Activated B cell treated with CpG ODN at 0.5 μM for 24 hours (primary cell): ENCODE measurements at regions of chr15 and their contacts with region 1.

Region 1: DNA sequence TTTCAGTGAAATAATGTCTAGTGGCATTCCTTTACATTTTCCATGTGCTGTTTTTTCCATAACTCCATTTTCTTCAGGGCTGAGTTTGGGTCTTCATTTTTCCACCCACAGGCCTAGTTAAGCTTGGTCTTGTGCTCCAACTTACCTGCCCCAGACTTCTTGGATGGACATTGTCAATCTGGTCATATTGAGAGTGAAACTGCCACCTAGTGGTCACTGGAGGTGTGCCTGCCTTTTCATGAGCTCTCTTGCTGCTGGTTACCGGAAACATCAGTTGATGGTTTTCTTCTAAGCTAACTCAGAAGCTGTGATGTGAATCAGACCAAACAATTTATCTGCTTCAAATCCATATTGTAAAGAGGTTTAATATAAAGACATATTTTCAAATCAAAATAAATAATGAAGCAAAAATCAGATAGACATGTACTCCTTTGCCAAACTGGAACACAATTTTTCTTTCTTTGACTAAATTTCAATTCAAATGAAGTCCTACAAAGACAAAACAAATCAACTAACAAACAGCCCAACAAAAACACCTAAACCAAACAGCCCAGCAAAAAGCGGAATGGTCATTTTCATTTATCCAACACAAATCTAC is 135.1 kb upstream of the RASGRP1 start:
- DNase-seq: no peak
- ATAC-seq: peak; percentile 88
- H3K4me3 Mint-ChIP-seq: no peak overlapping the region
- H3K27ac Mint-ChIP-seq: no peak overlapping the region
- H3K4me1 Mint-ChIP-seq: no peaks in the 10 kb centered on the region
- H3K27me3 Mint-ChIP-seq: no peaks in the 10 kb centered on the region
- CTCF ChIP-seq: no peak

Region 2: GRCh38 chr15:37995461-37996347 is 704.0 kb before region 1 on chr15:
- CTCF ChIA-PET with region 1: no interaction called
- POLR2A ChIA-PET with region 1: no interaction called
- intact Hi-C with region 1: loop called (anchors 10 kb)
- DNase-seq: no peak
- ATAC-seq: peak; percentile 47
- H3K4me3 Mint-ChIP-seq: no peak overlapping the region
- H3K27ac Mint-ChIP-seq: no peak overlapping the region
- H3K4me1 Mint-ChIP-seq: no peaks in the 10 kb centered on the region
- H3K27me3 Mint-ChIP-seq: peaks cover 16% of the 10 kb centered on the region
- CTCF ChIP-seq: no peak

Region 3: DNA sequence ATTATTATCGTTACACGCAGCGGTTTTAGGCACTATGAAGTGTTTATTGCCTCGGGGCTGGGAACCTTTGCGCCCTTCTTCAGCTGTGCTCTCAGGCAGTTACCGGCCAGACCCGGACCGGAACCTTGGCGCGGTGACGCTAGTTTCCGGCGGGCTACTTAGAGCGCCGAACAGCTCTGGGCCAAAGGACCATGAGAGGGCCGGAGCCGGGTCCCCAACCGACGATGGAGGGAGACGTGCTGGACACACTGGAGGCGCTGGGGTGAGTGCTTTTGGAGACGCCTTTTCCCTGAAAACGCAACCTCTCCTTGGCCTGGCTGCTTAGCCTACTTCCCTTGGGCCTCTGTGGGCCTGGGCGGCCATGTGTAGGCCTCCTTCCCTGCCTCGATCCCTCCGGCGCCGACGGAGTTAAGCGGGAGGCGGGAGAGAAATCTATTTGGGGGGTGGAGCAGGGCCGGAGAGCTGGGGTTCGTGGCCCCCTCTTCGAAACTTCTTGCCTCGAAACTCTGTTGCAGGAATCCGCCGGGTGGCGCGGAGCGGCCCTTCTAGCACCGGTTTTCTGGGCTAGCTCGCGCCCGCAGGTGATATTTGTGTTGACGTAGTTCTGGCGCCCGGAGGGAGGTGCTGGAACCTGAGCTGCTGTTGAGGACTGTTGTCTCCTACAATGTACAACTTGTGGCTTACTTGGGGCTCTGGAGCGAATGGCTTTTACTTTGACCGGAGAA is 245.6 kb before region 1 on chr15 and contains the start of gene FAM98B:
- CTCF ChIA-PET with region 1: interaction called, 22 read pairs
- POLR2A ChIA-PET with region 1: no interaction called
- intact Hi-C with region 1: no loop called
- DNase-seq: peak; percentile 92
- ATAC-seq: peak; percentile 90
- H3K4me3 Mint-ChIP-seq: peak within 1 kb of the TSS; percentile 97
- H3K27ac Mint-ChIP-seq: peak within 1 kb of the TSS; percentile 91
- H3K4me1 Mint-ChIP-seq: peaks cover 35% of the 10 kb centered on the region
- H3K27me3 Mint-ChIP-seq: peaks cover 2% of the 10 kb centered on the region
- CTCF ChIP-seq: no peak
- total RNA-seq, gene FAM98B: 29.9 and 30.7 TPM in 2 replicates

Region 4: GRCh38 chr15:38461066-38461833 is 238.5 kb before region 1 on chr15:
- CTCF ChIA-PET with region 1: interaction called, 10 read pairs
- POLR2A ChIA-PET with region 1: no interaction called
- intact Hi-C with region 1: no loop called
- DNase-seq: no peak
- ATAC-seq: peak; percentile 85
- H3K4me3 Mint-ChIP-seq: no peak overlapping the region
- H3K27ac Mint-ChIP-seq: no peak overlapping the region
- H3K4me1 Mint-ChIP-seq: peaks cover 36% of the 10 kb centered on the region
- H3K27me3 Mint-ChIP-seq: no peaks in the 10 kb centered on the region
- CTCF ChIP-seq: no peak

Region 5: GRCh38 chr15:38474155-38474757 is 225.5 kb before region 1 on chr15:
- CTCF ChIA-PET with region 1: interaction called, 52 read pairs
- POLR2A ChIA-PET with region 1: no interaction called
- intact Hi-C with region 1: loop called (anchors 1 kb)
- DNase-seq: no peak
- ATAC-seq: peak; percentile 100
- H3K4me3 Mint-ChIP-seq: no peak overlapping the region
- H3K27ac Mint-ChIP-seq: no peak overlapping the region
- H3K4me1 Mint-ChIP-seq: no peaks in the 10 kb centered on the region
- H3K27me3 Mint-ChIP-seq: no peaks in the 10 kb centered on the region
- CTCF ChIP-seq: no peak

Region 6: GRCh38 chr15:38479266-38479665 is 220.5 kb before region 1 on chr15:
- CTCF ChIA-PET with region 1: interaction called, 52 read pairs
- POLR2A ChIA-PET with region 1: no interaction called
- intact Hi-C with region 1: loop called (anchors 1 kb)
- DNase-seq: no peak
- ATAC-seq: no peak
- H3K4me3 Mint-ChIP-seq: no peak overlapping the region
- H3K27ac Mint-ChIP-seq: no peak overlapping the region
- H3K4me1 Mint-ChIP-seq: peaks cover 3% of the 10 kb centered on the region
- H3K27me3 Mint-ChIP-seq: no peaks in the 10 kb centered on the region
- CTCF ChIP-seq: no peak

Region 7: DNA sequence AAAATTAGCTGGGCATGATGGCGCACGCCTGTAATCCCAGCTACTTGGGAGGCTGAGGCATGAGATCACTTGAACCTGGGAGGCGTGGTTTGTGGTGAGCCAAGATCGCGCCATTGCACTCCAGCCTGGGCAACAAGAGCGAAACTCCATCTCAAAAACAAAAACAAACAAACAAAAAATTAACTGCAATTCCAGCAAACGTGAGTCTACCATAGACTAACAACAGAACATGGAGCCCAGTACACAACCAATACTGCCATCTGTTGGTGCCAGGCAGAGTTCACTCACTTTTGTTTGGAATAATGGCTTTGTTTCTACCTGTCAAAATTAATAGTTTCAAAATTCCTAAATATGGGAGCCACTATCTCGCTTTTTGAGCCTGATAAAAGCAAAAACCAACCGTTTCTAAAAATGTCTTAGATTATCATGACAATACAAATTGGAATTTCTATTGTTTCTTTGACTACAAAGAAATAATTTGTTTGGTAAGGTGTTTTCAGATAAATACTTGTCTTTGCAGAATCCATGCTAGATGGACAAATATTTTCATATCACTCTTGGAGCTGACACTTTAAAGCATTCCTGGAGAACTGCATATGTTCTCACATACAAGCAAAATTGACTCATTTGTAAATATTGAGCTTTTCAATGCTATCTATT is 1175.3 kb after region 1 on chr15:
- CTCF ChIA-PET with region 1: no interaction called
- POLR2A ChIA-PET with region 1: no interaction called
- intact Hi-C with region 1: loop called (anchors 10 kb)
- DNase-seq: no peak
- ATAC-seq: no peak
- H3K4me3 Mint-ChIP-seq: no peak overlapping the region
- H3K27ac Mint-ChIP-seq: no peak overlapping the region
- H3K4me1 Mint-ChIP-seq: no peaks in the 10 kb centered on the region
- H3K27me3 Mint-ChIP-seq: peaks cover under 1% of the 10 kb centered on the region
- CTCF ChIP-seq: no peak